Spleen (tissue), 13 donors: ENCODE measurements at regions of chr1 and their contacts with region 1.

Region 1: DNA sequence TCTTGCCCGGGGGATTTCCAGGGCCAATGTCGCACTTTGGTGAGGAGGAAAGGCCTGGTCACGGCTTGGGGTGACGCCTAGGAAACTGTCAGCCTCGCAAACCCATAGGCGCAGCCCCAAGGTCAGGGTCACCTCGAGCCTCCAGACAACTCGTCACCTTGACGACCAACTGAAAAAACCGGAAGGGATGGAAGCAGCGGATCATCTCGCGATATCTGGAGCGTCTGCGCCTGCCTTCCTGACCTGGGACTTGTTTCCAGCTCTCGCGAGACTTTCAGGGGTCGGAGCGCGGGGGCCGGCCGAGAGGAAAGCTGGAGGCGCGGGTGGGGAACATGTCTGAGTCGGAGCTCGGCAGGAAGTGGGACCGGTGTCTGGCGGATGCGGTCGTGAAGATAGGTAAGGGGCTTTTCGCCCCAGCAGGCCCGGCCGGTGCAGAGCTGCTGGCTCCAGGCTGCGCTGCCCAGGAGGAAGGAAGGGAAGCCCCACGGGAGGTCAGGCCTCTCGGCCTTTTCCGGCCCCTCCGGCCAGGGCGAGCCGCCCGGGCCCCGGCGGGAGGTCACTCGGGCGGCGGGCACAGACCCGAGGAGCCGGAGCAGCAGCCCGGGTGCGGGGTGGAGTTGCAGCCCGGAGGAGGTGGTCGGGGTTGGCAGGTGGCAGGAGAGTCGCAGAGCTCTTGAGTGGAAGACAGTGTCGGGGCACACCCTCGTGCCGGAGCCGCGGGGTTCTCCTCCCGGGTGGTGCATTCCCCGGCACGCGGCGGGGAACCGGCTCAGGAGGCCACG is 47.2 kb upstream of the NBL1 start:
- DNase-seq: peak; percentile 98
- H3K4me3 ChIP-seq: peak overlapping the region; percentile 65 to 99 (median 86)
- H3K27ac ChIP-seq: peak overlapping the region; percentile 93 to 97 (median 95)
- H3K4me1 ChIP-seq: peaks cover 25 to 60% (median 38%) of the 10 kb centered on the region in 6 donors
- H3K27me3 ChIP-seq: no peaks in the 10 kb centered on the region
- CTCF ChIP-seq: peak in 3 of 11 experiments; percentile 21 to 51 (median 50)
- POLR2A ChIP-seq: peak; percentile 8 to 53 (median 18)

Region 2: GRCh38 chr1:19485362-19486187 is 111.3 kb before region 1 on chr1 and contains the start of gene CAPZB:
- intact Hi-C with region 1: loop called (anchors 10 kb)
- DNase-seq: peak; percentile 99
- H3K4me3 ChIP-seq: peak within 1 kb of the TSS; percentile 76 to 99 (median 94)
- H3K27ac ChIP-seq: peak within 1 kb of the TSS; percentile 95 to 100 (median 98)
- H3K4me1 ChIP-seq: peaks cover 51 to 76% (median 63%) of the 10 kb centered on the region in 6 donors
- H3K27me3 ChIP-seq: no peaks in the 10 kb centered on the region
- CTCF ChIP-seq: peak in 1 of 11 experiments; percentile 15
- POLR2A ChIP-seq: peak in 1 of 3 donors; percentile 63
- total RNA-seq, gene CAPZB: 139 to 386 (median 302) TPM

Region 3: DNA sequence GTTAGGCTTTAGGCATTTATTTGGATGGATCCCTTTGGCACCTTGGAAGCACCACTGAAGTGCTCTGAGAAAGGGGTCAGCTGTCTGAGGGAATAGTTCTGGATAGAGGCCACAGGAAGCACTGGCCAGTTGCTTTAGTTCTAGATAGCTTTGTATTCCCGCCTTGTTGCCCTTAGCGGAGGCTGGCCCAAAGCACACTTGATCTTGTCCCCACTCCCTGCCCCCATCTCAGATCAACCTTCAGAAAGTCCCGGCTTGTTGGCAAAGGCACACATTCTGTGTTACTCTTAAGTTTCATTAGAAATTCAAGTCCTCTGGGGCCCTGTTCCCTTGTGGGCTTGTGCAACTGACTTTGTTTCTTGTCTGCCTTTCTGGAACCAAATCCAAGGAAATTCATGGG is 32.0 kb after region 1 on chr1:
- intact Hi-C with region 1: no loop called
- DNase-seq: no peak
- H3K4me3 ChIP-seq: no peak overlapping the region
- H3K27ac ChIP-seq: no peak overlapping the region
- H3K4me1 ChIP-seq: no peaks in the 10 kb centered on the region
- H3K27me3 ChIP-seq: no peaks in the 10 kb centered on the region
- CTCF ChIP-seq: no peak
- POLR2A ChIP-seq: no peak